CD8-positive, alpha-beta T cell (primary cell): ENCODE measurements at regions of chr20 and their contacts with region 1.

Region 1: GRCh38 chr20:33489495-33490022 is 337 bp upstream of the CBFA2T2 start:
- DNase-seq: peak; percentile 98 to 99 (median 99)
- ATAC-seq: peak; percentile 94
- H3K4me3 ChIP-seq: peak overlapping the region; percentile 58 to 89
- H3K4me3 Mint-ChIP-seq: peak overlapping the region; percentile 89
- H3K27ac ChIP-seq: peak overlapping the region; percentile 96 to 97
- H3K27ac Mint-ChIP-seq: peak overlapping the region; percentile 96
- H3K4me1 ChIP-seq: peaks cover 11% of the 10 kb centered on the region
- H3K4me1 Mint-ChIP-seq: peaks cover 19% of the 10 kb centered on the region
- H3K27me3 ChIP-seq: no peaks in the 10 kb centered on the region
- H3K27me3 Mint-ChIP-seq: no peaks in the 10 kb centered on the region
- CTCF ChIP-seq: no peak

Region 2: DNA sequence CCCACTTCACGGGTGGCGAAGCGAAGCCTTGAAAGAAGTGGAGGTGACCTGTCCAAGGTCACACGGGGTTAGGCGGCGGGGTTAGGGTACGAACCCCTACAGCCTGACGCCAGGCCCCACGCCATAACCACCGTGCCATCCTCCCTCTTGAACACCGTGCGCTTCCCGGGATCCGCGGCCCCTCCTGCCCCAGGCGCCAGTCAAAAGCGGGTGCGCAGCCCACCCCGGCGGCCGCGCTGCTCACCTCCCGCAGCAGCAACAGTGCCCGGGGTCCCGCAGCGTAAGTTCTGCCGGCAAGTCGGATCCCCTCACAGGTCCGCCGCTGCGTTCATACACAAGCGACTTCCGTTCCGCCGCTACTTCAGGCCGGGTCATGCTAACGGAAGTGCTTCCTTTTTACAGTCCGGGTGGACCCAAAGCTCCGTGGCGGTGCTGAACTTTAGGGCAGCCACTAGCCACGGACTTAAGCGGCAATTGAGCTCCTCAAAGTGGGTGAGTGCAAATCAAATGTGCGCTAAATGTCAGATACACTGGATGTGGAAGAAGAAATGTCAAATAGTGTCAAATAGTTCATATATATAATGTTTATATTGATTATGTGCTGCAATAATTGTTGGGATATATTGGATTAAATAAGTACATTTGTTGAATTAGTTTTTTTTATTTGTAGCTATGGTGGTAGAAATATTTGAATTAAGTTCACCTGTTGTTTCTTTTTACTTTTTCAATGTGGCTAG is 88.2 kb before region 1 on chr20 and contains the start of gene CDK5RAP1:
- CTCF ChIA-PET with region 1: no interaction called
- POLR2A ChIA-PET with region 1: interaction called, 5 read pairs
- intact Hi-C with region 1: loop called in 1 of 2 experiments (anchors 2 kb)
- DNase-seq: peak; percentile 71 to 93 (median 85)
- ATAC-seq: peak; percentile 96
- H3K4me3 ChIP-seq: peak within 1 kb of the TSS; percentile 66 to 67
- H3K4me3 Mint-ChIP-seq: peak within 1 kb of the TSS; percentile 97
- H3K27ac ChIP-seq: peak within 1 kb of the TSS; percentile 56 to 64
- H3K27ac Mint-ChIP-seq: peak within 1 kb of the TSS; percentile 93
- H3K4me1 ChIP-seq: peaks cover 26% of the 10 kb centered on the region
- H3K4me1 Mint-ChIP-seq: peaks cover 55% of the 10 kb centered on the region
- H3K27me3 ChIP-seq: no peaks in the 10 kb centered on the region
- H3K27me3 Mint-ChIP-seq: no peaks in the 10 kb centered on the region
- CTCF ChIP-seq: no peak
- total RNA-seq, gene CDK5RAP1: 60.7 to 69.9 TPM

Region 3: DNA sequence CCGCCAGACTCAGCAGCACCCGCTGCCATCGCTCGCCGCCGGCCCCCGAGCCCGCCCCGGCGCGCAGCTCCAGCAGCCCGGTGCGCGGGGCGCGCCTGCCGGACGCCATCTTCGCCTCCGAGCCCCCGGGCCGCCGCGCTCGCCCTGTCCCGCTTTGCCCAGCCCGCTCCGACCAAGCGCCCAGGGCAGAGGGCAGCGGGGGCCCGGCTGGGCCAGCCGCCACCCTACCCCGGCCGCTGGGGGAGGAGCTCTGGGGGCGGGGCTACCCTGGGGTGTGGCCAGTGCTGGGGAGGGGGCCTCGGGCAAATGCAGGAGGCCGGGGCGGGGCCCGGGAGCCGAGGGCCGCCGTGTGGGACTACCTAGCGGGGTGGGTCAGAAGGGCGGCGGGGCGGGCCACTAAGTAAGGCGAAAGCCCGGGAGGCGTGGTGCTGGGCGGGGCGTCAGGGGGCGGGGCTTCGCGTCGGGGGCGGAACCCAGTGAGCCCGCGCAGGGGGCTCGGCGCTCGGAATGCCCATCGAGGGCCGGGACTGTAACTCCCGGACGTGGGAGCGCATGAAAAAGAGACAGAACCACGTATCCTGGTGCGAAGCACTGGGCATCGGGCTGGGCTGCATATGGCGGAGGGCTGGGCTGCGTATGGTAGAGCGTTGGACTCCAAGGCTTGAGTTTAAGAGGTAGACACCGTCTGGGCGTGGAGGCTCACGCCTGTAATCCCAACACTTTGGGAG is 45.9 kb before region 1 on chr20 and contains the start of gene SNTA1:
- CTCF ChIA-PET with region 1: no interaction called
- POLR2A ChIA-PET with region 1: interaction called, 17 read pairs
- intact Hi-C with region 1: loop called (anchors 1 kb)
- DNase-seq: peak; percentile 67 to 90 (median 87)
- ATAC-seq: peak; percentile 69
- H3K4me3 ChIP-seq: peak within 1 kb of the TSS; percentile 85 to 97
- H3K4me3 Mint-ChIP-seq: peak within 1 kb of the TSS; percentile 94
- H3K27ac ChIP-seq: peak within 1 kb of the TSS; percentile 59 to 66
- H3K27ac Mint-ChIP-seq: peak within 1 kb of the TSS; percentile 92
- H3K4me1 ChIP-seq: peaks cover 16% of the 10 kb centered on the region
- H3K4me1 Mint-ChIP-seq: peaks cover 21% of the 10 kb centered on the region
- H3K27me3 ChIP-seq: no peaks in the 10 kb centered on the region
- H3K27me3 Mint-ChIP-seq: no peaks in the 10 kb centered on the region
- CTCF ChIP-seq: no peak
- total RNA-seq, gene SNTA1: 3.9 to 5.5 TPM

Region 4: DNA sequence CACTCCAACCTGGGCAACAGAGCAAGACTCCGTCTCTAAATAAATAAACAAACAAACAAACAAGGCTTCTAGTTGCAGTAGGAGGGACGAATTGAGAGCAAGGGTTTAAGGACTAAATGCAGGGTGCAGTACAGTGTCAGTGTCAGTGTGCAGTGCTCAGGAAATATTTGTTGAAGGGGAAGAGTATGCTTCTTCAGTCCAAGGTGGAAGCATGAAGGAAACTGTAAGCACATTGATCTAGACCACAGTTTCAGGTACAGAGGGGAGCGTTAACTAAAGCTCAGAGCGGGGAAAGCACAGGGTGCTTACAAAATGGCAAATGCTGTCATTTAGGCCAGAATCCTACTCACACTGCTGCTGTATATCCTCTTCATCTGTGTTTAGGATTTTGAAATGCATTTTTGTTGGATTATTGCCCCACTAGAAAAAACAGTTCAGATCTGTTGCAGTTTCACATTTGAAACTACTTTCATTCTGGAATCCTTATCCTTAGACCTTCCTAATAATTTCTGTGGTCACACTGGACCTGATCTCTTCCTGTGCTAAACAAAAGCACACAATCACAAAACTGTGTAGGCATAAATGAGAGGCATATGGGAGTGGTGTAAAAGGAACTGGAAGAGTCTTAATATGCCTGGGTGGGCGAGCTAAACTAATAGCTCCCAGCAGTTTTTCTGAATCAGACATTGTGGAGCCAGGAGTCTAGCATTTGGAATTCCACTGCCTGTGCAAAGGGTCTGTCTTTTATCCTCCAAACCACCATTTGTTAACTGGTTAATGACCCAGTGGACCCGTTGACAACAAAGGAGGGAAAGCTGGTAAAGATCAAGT is 41.7 kb after region 1 on chr20:
- CTCF ChIA-PET with region 1: no interaction called
- POLR2A ChIA-PET with region 1: no interaction called
- intact Hi-C with region 1: no loop called
- DNase-seq: no peak
- ATAC-seq: no peak
- H3K4me3 ChIP-seq: no peak overlapping the region
- H3K4me3 Mint-ChIP-seq: no peak overlapping the region
- H3K27ac ChIP-seq: no peak overlapping the region
- H3K27ac Mint-ChIP-seq: no peak overlapping the region
- H3K4me1 ChIP-seq: peaks cover 4% of the 10 kb centered on the region
- H3K4me1 Mint-ChIP-seq: peaks cover 30% of the 10 kb centered on the region
- H3K27me3 ChIP-seq: no peaks in the 10 kb centered on the region
- H3K27me3 Mint-ChIP-seq: no peaks in the 10 kb centered on the region
- CTCF ChIP-seq: no peak

Region 5: DNA sequence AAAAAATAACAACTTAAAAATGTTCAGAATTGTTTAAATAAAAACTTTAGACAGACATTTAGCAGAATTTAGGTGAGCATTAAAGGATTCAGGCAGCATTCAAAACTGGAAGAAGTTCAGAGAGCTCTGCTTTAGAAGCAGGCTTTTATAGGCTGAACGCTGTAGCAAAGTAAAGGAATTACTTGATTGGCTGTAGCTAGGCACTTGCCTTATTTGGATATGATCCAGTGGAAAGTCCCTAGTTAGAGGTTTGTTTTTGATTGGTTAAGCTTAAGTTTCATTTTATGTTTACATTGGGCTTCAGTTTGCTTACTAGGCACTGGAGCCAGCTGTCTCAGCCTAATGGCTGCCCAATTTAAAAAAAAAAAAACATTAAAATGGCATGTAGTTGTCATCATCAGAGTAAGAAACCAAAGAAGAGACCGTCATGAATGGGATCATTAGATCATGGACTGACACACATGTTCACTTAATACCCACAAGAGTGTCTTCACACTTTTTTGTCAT is 65.4 kb after region 1 on chr20:
- CTCF ChIA-PET with region 1: no interaction called
- POLR2A ChIA-PET with region 1: interaction called, 11 read pairs
- intact Hi-C with region 1: loop called (anchors 1 kb)
- DNase-seq: peak in 6 of 9 experiments; percentile 3 to 95 (median 43)
- ATAC-seq: peak; percentile 95
- H3K4me3 ChIP-seq: peak overlapping the region; percentile 11 to 24
- H3K4me3 Mint-ChIP-seq: peak overlapping the region; percentile 72
- H3K27ac ChIP-seq: peak overlapping the region; percentile 62 to 92
- H3K27ac Mint-ChIP-seq: peak overlapping the region; percentile 96
- H3K4me1 ChIP-seq: peaks cover 14% of the 10 kb centered on the region
- H3K4me1 Mint-ChIP-seq: peaks cover 28% of the 10 kb centered on the region
- H3K27me3 ChIP-seq: no peaks in the 10 kb centered on the region
- H3K27me3 Mint-ChIP-seq: no peaks in the 10 kb centered on the region
- CTCF ChIP-seq: no peak

Region 6: DNA sequence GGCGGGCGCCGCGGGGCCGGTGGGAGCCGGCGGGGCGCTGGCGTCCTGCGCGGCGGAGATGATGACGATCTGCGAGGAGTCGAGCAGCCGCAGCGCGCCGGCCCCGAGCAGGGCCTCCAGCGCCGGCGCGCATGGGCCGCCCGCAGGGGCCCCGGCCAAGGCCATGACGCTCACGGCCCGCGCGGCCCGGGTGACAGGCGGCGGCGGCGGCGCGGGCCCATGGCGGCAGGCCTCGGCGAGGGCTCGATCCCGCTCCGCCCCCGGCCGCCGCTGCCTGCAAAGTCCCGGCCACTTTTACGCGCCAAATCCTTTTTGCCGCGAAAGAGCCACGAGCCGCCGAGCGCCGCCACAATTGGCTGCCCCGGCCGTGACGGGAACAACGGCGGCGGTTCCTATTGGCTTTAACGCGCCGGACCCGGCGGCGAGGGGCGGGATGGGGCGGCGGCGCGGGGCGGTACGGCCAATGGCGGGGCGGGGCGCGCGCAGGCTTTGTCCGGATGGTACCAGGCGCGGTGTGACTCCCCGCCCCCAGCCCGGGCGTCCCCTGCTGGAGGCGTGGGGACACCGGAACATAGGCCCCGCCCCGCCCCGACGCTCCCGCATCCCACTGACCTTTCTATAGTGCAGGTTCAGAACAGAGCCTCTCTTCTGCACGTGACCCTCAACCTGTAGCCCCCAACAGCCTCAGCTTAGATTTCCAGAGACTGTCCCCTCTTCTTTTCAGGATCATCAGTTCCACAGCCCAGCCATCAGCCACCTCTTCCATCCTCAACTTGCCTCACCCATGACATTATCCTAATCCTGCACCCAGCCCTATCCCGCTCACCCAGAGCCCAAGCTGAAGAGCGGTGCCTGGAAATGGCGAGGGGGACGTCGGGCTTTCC is 196.8 kb after region 1 on chr20 and contains the start of gene E2F1:
- CTCF ChIA-PET with region 1: no interaction called
- POLR2A ChIA-PET with region 1: interaction called, 3 read pairs
- intact Hi-C with region 1: loop called in 1 of 2 experiments (anchors 1 kb)
- DNase-seq: peak; percentile 87 to 97 (median 93)
- ATAC-seq: peak; percentile 89
- H3K4me3 ChIP-seq: peak within 1 kb of the TSS; percentile 39
- H3K4me3 Mint-ChIP-seq: peak within 1 kb of the TSS; percentile 81
- H3K27ac ChIP-seq: peak within 1 kb of the TSS; percentile 15 to 49
- H3K27ac Mint-ChIP-seq: peak within 1 kb of the TSS; percentile 79
- H3K4me1 ChIP-seq: peaks cover 35% of the 10 kb centered on the region
- H3K4me1 Mint-ChIP-seq: peaks cover 37% of the 10 kb centered on the region
- H3K27me3 ChIP-seq: no peaks in the 10 kb centered on the region
- H3K27me3 Mint-ChIP-seq: no peaks in the 10 kb centered on the region
- CTCF ChIP-seq: no peak
- total RNA-seq, gene E2F1: 1.2 to 1.3 TPM

Region 7: GRCh38 chr20:33719989-33720709 is 230.6 kb after region 1 on chr20 and contains the start of gene PXMP4:
- CTCF ChIA-PET with region 1: no interaction called
- POLR2A ChIA-PET with region 1: no interaction called
- intact Hi-C with region 1: loop called in 1 of 2 experiments (anchors 1 kb)
- DNase-seq: peak; percentile 71 to 97 (median 84)
- ATAC-seq: peak; percentile 94
- H3K4me3 ChIP-seq: peak within 1 kb of the TSS; percentile 72 to 95
- H3K4me3 Mint-ChIP-seq: peak within 1 kb of the TSS; percentile 86
- H3K27ac ChIP-seq: peak within 1 kb of the TSS; percentile 68 to 78
- H3K27ac Mint-ChIP-seq: peak within 1 kb of the TSS; percentile 91
- H3K4me1 ChIP-seq: peaks cover 16% of the 10 kb centered on the region
- H3K4me1 Mint-ChIP-seq: peaks cover 29% of the 10 kb centered on the region
- H3K27me3 ChIP-seq: no peaks in the 10 kb centered on the region
- H3K27me3 Mint-ChIP-seq: no peaks in the 10 kb centered on the region
- CTCF ChIP-seq: no peak
- total RNA-seq, gene PXMP4: 2.7 to 2.8 TPM